GM12878 (cell line): ENCODE measurements at regions of chr5 and their contacts with region 1.

Region 1: DNA sequence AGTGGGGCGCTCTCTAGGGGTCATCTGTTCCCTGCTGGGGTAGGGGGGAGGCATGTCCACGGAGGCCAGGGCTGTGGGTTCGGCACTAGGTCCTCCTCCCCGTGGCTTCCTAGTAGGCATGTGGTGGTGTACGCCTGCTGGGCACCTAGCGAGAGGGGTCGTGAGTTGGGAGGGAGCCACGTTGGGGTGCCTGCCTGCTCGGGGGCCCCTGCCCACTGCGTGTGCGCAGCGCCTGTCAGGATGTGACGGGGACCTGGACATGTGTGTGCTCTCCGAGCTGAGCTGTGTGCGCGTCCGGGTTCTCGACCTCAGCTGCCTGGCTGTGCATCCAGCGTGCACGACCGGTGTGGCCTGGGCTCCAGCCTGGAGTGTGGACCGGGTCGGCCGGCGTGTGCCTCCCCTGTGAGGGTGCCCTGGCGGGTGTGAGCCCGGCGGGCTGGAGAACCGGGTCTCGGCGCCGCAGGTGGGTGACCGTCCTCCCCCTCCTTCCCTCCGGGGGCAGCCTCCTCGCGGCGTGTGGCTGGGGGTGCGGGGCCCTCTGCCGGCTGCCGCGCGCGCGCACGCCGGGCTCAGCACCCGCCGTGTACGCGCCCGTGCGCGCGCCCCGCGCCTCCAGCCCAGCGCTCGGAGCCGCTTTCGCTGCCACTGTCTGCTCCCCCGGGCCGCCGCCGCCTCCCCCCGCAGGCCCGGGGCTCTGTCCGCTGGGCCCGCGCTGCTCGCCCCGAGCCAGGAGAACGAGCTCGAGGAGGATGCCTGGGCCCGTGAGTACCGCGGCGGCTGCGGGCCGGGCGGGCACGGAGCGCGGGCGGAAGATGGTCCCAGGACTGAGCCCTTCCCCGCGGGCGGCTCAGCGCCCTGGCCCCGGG is at the start of gene PRR7:
- DNase-seq: no peak
- ATAC-seq: peak; percentile 55
- H3K4me3 ChIP-seq: peak within 1 kb of the TSS; percentile 78
- H3K27ac ChIP-seq: peak within 1 kb of the TSS; percentile 79
- H3K4me1 ChIP-seq: peaks cover 32% of the 10 kb centered on the region
- H3K27me3 ChIP-seq: no peaks in the 10 kb centered on the region
- CTCF ChIP-seq: peak in 1 of 3 experiments; percentile 26; a peak in 1 of 6 replicates
- EP300 ChIP-seq: 0 out of 4 replicates have a peak, but pooled peaks of 1 of the 2 experiments have one; percentile 15
- POLR2A ChIP-seq: no peak
- RAD21 ChIP-seq: no peak
- polyA plus RNA-seq, gene PRR7: not detected

Region 2: GRCh38 chr5:177317959-177318377 is 128.5 kb before region 1 on chr5:
- CTCF ChIA-PET with region 1: interaction called, 8 read pairs
- POLR2A ChIA-PET with region 1: no interaction called
- RAD21 ChIA-PET with region 1: interaction called, 3 read pairs
- SMC1A ChIA-PET with region 1: interaction called, 3 read pairs
- in situ Hi-C with region 1: loop called (anchors 5 kb)
- intact Hi-C with region 1: no loop called
- DNase-seq: no peak
- ATAC-seq: peak; percentile 80
- H3K4me3 ChIP-seq: no peak overlapping the region
- H3K27ac ChIP-seq: no peak overlapping the region
- H3K4me1 ChIP-seq: peaks cover 11% of the 10 kb centered on the region
- H3K27me3 ChIP-seq: no peaks in the 10 kb centered on the region
- CTCF ChIP-seq: peak; percentile 85 to 97 (median 93)
- EP300 ChIP-seq: no peak
- POLR2A ChIP-seq: no peak
- RAD21 ChIP-seq: peak; percentile 90

Region 3: GRCh38 chr5:177412603-177413233 is 33.7 kb before region 1 on chr5:
- CTCF ChIA-PET with region 1: interaction called, 6 read pairs
- POLR2A ChIA-PET with region 1: interaction called, 10 read pairs
- RAD21 ChIA-PET with region 1: interaction called, 6 read pairs
- SMC1A ChIA-PET with region 1: interaction called, 14 read pairs
- in situ Hi-C with region 1: no loop called
- intact Hi-C with region 1: no loop called
- DNase-seq: peak; percentile 71
- ATAC-seq: peak; percentile 88
- H3K4me3 ChIP-seq: peak overlapping the region; percentile 33; the same call in 1 of the 2 replicates
- H3K27ac ChIP-seq: peak overlapping the region; percentile 83
- H3K4me1 ChIP-seq: peaks cover 18% of the 10 kb centered on the region
- H3K27me3 ChIP-seq: no peaks in the 10 kb centered on the region
- CTCF ChIP-seq: no peak
- EP300 ChIP-seq: peak in 1 of 2 experiments; percentile 74; a peak in 3 of 4 replicates
- POLR2A ChIP-seq: peak; percentile 66
- RAD21 ChIP-seq: no peak

Region 4: GRCh38 chr5:177425801-177426565 is 20.4 kb before region 1 on chr5:
- CTCF ChIA-PET with region 1: interaction called, 114 read pairs
- POLR2A ChIA-PET with region 1: interaction called, 358 read pairs
- RAD21 ChIA-PET with region 1: interaction called, 288 read pairs
- SMC1A ChIA-PET with region 1: interaction called, 73 read pairs
- in situ Hi-C with region 1: no loop called
- intact Hi-C with region 1: loop called (anchors 2 kb)
- DNase-seq: peak; percentile 100
- ATAC-seq: peak; percentile 81
- H3K4me3 ChIP-seq: peak overlapping the region; percentile 62; the same call in 1 of the 2 replicates
- H3K27ac ChIP-seq: peak overlapping the region; percentile 99
- H3K4me1 ChIP-seq: peaks cover 37% of the 10 kb centered on the region
- H3K27me3 ChIP-seq: no peaks in the 10 kb centered on the region
- CTCF ChIP-seq: no peak
- EP300 ChIP-seq: peak in 1 of 2 experiments; percentile 43; a peak in 1 of 4 replicates
- POLR2A ChIP-seq: no peak
- RAD21 ChIP-seq: no peak

Region 5: GRCh38 chr5:177431317-177432142 is 14.9 kb before region 1 on chr5:
- CTCF ChIA-PET with region 1: interaction called, 114 read pairs
- POLR2A ChIA-PET with region 1: interaction called, 358 read pairs
- RAD21 ChIA-PET with region 1: interaction called, 288 read pairs
- SMC1A ChIA-PET with region 1: interaction called, 73 read pairs
- in situ Hi-C with region 1: no loop called
- intact Hi-C with region 1: loop called (anchors 2 kb)
- DNase-seq: peak; percentile 77
- ATAC-seq: peak; percentile 59
- H3K4me3 ChIP-seq: peak overlapping the region; percentile 83; the same call in 1 of the 2 replicates
- H3K27ac ChIP-seq: peak overlapping the region; percentile 94
- H3K4me1 ChIP-seq: peaks cover 49% of the 10 kb centered on the region
- H3K27me3 ChIP-seq: no peaks in the 10 kb centered on the region
- CTCF ChIP-seq: no peak
- EP300 ChIP-seq: peak; percentile 55 to 61; a peak in 3 of 4 replicates
- POLR2A ChIP-seq: no peak
- RAD21 ChIP-seq: no peak